ENCODE measurements at regions of chr1 and their contacts with region 1.

Region 1: GRCh38 chr1:176149939-176150807 is 56.9 kb downstream of the COP1 start:
- DNase-seq: no peak
- H3K4me3 ChIP-seq: no peak overlapping the region
- H3K27ac ChIP-seq: no peak overlapping the region
- H3K4me1 ChIP-seq: no peaks in the 10 kb centered on the region
- H3K27me3 ChIP-seq: no peaks in the 10 kb centered on the region
- CTCF ChIP-seq: no peak

Region 2: GRCh38 chr1:176090766-176091165 is 59.4 kb before region 1 on chr1:
- CTCF ChIA-PET with region 1: no interaction called
- POLR2A ChIA-PET with region 1: no interaction called
- intact Hi-C with region 1: loop called (anchors 10 kb)
- DNase-seq: no peak
- H3K4me3 ChIP-seq: no peak overlapping the region
- H3K27ac ChIP-seq: no peak overlapping the region
- H3K4me1 ChIP-seq: no peaks in the 10 kb centered on the region
- H3K27me3 ChIP-seq: no peaks in the 10 kb centered on the region
- CTCF ChIP-seq: no peak